ENCODE measurements at regions of chr1 and their contacts with region 1.

Region 1: DNA sequence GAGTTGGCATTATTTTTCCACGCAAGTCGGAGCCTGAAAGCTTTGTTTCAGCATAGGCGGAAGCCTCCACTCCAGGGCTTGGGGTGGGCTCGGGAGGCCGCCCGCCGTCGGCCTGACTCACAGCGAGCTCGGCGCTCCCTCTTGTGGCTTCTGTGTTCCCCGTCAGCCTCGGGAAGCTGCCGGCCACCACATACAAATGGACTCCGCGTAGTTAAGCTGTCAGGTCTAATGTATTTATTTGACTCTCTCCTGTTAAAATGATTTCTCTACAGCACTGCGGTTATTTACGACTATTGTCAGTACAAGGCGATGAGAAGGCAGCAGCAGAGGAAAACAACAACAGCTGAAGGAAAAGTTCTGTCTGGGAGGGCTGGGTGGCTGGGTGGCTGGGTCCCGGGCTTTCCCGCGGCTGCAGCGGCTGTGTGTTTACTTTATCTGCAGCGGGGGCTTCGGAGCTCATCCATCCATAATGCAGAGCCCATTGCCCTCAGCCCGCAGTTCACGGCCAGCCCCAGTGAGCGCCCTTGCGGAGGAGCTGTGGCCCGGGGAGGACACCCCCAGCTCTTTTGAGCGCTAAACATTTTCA is 375.7 kb upstream of the CAMK1G start:
- DNase-seq: peak; percentile 24
- ATAC-seq: peak; percentile 100
- H3K4me3 ChIP-seq: peak overlapping the region in 1 of 3 experiments; percentile 47; a peak in 2 of 6 replicates
- H3K27ac ChIP-seq: no peak overlapping the region
- H3K4me1 ChIP-seq: no peaks in the 10 kb centered on the region
- H3K27me3 ChIP-seq: peaks cover 3 to 19% of the 10 kb centered on the region in 2 experiments; a peak in 4 of 5 replicates
- CTCF ChIP-seq: peak; percentile 83
- EP300 ChIP-seq: no peak
- POLR2A ChIP-seq: no peak
- RAD21 ChIP-seq: peak; percentile 69

Region 2: DNA sequence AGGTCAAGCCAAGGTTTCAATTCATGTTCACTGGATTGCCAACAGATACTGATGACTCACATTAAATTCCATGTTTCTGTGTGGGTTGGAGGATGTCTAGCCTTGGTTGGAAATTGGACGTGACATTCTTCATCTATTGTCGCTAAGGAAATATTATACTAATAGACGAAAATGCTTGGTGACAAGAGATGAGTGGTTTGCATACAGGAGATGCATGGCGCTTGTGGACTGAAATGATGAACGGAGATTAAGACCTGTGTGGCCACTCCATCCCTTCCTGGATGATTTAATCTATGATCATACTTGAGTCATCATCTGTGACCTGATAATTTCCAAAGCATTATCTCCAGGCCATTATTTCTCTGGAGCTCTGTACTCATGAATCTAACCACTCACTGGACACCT is 1199.9 kb before region 1 on chr1:
- CTCF ChIA-PET with region 1: no interaction called
- POLR2A ChIA-PET with region 1: no interaction called
- in situ Hi-C with region 1: loop called (anchors 25 kb)
- intact Hi-C with region 1: no loop called
- DNase-seq: no peak
- ATAC-seq: no peak
- H3K4me3 ChIP-seq: no peak overlapping the region
- H3K27ac ChIP-seq: no peak overlapping the region
- H3K4me1 ChIP-seq: no peaks in the 10 kb centered on the region
- H3K27me3 ChIP-seq: peaks cover 0 to 6% of the 10 kb centered on the region in 2 experiments; a peak in 2 of 5 replicates
- CTCF ChIP-seq: no peak
- EP300 ChIP-seq: no peak
- POLR2A ChIP-seq: no peak
- RAD21 ChIP-seq: no peak

Region 3: GRCh38 chr1:208652296-208653160 is 555.3 kb before region 1 on chr1:
- CTCF ChIA-PET with region 1: interaction called, 3 read pairs
- POLR2A ChIA-PET with region 1: no interaction called
- in situ Hi-C with region 1: loop called (anchors 10 kb)
- intact Hi-C with region 1: no loop called
- DNase-seq: peak; percentile 23
- ATAC-seq: peak; percentile 89
- H3K4me3 ChIP-seq: no peak overlapping the region
- H3K27ac ChIP-seq: no peak overlapping the region
- H3K4me1 ChIP-seq: no peaks in the 10 kb centered on the region
- H3K27me3 ChIP-seq: no peaks in the 10 kb centered on the region
- CTCF ChIP-seq: peak; percentile 77
- EP300 ChIP-seq: no peak
- POLR2A ChIP-seq: no peak
- RAD21 ChIP-seq: no peak

Region 4: DNA sequence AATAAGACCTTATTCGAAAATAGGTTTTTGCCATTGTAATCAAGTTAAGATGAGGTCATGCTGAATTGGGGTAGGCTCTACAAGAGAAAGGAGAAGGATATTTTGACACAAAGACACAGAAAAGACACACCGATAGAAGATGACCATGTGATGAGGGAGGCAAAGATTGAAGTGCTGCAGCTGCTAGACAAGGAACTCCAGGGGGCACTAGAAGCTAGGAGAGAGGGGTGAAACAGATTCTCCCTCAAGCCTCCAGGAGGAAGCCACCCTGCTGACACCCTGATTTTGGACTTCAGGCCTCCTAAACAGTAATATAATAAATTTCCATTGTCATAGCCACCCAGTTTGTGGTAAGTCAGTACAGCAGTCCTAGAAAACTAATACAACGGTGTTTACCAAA is 131.1 kb before region 1 on chr1:
- CTCF ChIA-PET with region 1: no interaction called
- POLR2A ChIA-PET with region 1: no interaction called
- in situ Hi-C with region 1: no loop called
- intact Hi-C with region 1: loop called (anchors 10 kb)
- DNase-seq: no peak
- ATAC-seq: peak; percentile 66
- H3K4me3 ChIP-seq: no peak overlapping the region
- H3K27ac ChIP-seq: no peak overlapping the region
- H3K4me1 ChIP-seq: no peaks in the 10 kb centered on the region
- H3K27me3 ChIP-seq: no peaks in the 10 kb centered on the region
- CTCF ChIP-seq: peak; percentile 40
- EP300 ChIP-seq: no peak
- POLR2A ChIP-seq: no peak
- RAD21 ChIP-seq: no peak

Region 5: DNA sequence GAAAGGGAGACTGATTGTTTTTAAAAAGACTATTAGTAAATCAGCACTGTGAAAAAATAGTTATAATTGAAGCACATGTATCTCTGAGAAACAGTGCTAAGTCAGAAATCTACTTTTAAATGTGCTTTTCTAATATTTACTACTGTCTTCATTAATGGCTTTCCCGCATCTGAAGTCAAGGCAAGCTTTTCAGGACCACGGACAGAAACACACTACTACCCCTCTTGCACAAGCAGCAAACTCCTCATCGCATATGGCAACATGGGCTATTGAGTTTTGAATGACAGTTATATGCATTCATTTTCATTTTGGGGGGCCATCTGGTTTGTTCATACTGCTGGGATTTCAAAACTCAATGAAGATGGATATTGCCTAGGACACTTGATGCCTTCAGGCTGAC is 57.7 kb before region 1 on chr1:
- CTCF ChIA-PET with region 1: no interaction called
- POLR2A ChIA-PET with region 1: no interaction called
- in situ Hi-C with region 1: no loop called
- intact Hi-C with region 1: no loop called
- DNase-seq: peak; percentile 3
- ATAC-seq: no peak
- H3K4me3 ChIP-seq: no peak overlapping the region
- H3K27ac ChIP-seq: no peak overlapping the region
- H3K4me1 ChIP-seq: no peaks in the 10 kb centered on the region
- H3K27me3 ChIP-seq: no peaks in the 10 kb centered on the region
- CTCF ChIP-seq: no peak
- EP300 ChIP-seq: no peak
- POLR2A ChIP-seq: no peak
- RAD21 ChIP-seq: no peak

Region 6: GRCh38 chr1:209248649-209249279 is 41.0 kb after region 1 on chr1:
- CTCF ChIA-PET with region 1: interaction called, 7 read pairs
- POLR2A ChIA-PET with region 1: no interaction called
- in situ Hi-C with region 1: no loop called
- intact Hi-C with region 1: loop called (anchors 2 kb)
- DNase-seq: peak; percentile 34
- ATAC-seq: peak; percentile 78
- H3K4me3 ChIP-seq: no peak overlapping the region
- H3K27ac ChIP-seq: no peak overlapping the region
- H3K4me1 ChIP-seq: no peaks in the 10 kb centered on the region
- H3K27me3 ChIP-seq: no peaks in the 10 kb centered on the region
- CTCF ChIP-seq: peak; percentile 77
- EP300 ChIP-seq: no peak
- POLR2A ChIP-seq: no peak
- RAD21 ChIP-seq: no peak

Region 7: GRCh38 chr1:209435654-209436566 is 228.1 kb after region 1 on chr1:
- CTCF ChIA-PET with region 1: no interaction called
- POLR2A ChIA-PET with region 1: no interaction called
- in situ Hi-C with region 1: no loop called
- intact Hi-C with region 1: loop called (anchors 10 kb)
- DNase-seq: peak; percentile 33
- ATAC-seq: peak; percentile 91
- H3K4me3 ChIP-seq: no peak overlapping the region
- H3K27ac ChIP-seq: no peak overlapping the region
- H3K4me1 ChIP-seq: no peaks in the 10 kb centered on the region
- H3K27me3 ChIP-seq: no peaks in the 10 kb centered on the region; a peak in 1 of 5 replicates
- CTCF ChIP-seq: peak; percentile 66
- EP300 ChIP-seq: no peak
- POLR2A ChIP-seq: no peak
- RAD21 ChIP-seq: no peak

Region 8: DNA sequence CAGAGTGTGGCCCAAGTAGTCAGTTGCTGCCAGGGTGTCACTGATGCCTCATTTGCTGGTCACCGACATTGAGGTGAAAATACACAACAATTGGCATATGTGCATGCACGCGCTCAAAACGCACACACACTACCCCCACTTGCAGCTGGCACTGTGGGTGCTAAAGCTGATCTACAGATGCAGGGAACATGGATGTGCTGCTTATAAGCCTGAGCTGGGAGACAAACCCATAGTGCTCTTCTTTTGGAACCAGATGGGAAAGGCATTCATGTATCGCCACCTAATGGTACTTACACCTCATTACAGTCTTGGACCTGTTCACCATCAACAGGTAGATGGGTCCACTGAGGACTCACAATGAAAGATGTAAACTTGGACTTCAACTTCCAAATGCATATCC is 305.4 kb after region 1 on chr1:
- CTCF ChIA-PET with region 1: no interaction called
- POLR2A ChIA-PET with region 1: no interaction called
- in situ Hi-C with region 1: no loop called
- intact Hi-C with region 1: loop called (anchors 5 kb)
- DNase-seq: peak; percentile 24
- ATAC-seq: peak; percentile 79
- H3K4me3 ChIP-seq: no peak overlapping the region
- H3K27ac ChIP-seq: no peak overlapping the region
- H3K4me1 ChIP-seq: no peaks in the 10 kb centered on the region
- H3K27me3 ChIP-seq: no peaks in the 10 kb centered on the region
- CTCF ChIP-seq: peak; percentile 61
- EP300 ChIP-seq: no peak
- POLR2A ChIP-seq: no peak
- RAD21 ChIP-seq: no peak; the same call in 1 of the 2 replicates

Measured in HepG2 (cell line).